ENCODE measurements at regions of chr7 and their contacts with region 1.

Region 1: DNA sequence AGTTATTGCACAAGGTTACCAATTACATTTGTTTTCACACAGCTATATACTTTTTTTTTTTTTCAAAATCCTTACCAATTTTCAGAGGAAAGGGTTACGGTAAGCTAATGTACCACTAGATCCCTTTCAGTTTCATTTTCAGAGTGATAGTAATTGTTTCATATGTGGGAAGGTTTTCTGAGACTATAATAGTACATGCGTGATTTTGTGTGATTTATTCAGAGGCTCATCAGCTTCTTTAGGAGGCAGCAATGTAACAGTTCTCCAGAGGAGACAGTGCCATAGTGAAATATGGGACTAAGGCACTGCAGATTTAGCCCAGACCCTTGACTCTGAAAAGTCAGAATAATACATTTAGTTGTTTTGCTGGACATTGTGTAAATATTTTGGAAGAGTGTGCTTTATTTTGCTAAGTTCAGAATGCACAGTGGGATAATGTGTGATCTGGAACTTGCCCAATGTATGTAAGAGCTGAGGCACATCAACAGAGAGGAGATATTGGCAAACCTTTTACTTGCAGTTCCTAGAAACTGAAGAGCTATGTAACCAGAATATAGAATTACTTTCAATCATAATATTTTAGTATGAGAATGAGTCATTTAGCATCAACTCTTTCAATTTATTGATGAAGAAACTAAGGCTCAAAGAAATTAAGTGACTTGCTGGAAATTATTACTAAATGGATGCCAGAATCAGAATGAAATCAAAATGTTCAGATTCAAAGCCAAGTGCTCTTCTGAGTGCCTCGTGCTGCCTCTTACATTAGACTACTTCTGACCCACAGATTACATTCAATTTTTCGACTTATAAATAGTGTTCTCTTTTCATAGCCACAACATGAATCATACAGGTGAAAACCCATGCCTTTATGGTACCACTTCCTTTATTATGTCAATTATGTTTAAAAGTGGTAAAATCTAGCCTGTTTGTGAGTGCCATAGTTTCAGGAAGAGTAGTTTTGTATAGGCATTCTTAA is 207.7 kb upstream of the TEX47 start:
- DNase-seq: no peak
- ATAC-seq: no peak
- H3K4me3 ChIP-seq: peak overlapping the region in 7 of 10 donors; percentile 7 to 42 (median 35)
- H3K27ac ChIP-seq: no peak overlapping the region
- H3K4me1 ChIP-seq: peaks cover 0 to 8% (median 0%) of the 10 kb centered on the region in 9 donors
- H3K27me3 ChIP-seq: no peaks in the 10 kb centered on the region
- CTCF ChIP-seq: no peak

Region 2: DNA sequence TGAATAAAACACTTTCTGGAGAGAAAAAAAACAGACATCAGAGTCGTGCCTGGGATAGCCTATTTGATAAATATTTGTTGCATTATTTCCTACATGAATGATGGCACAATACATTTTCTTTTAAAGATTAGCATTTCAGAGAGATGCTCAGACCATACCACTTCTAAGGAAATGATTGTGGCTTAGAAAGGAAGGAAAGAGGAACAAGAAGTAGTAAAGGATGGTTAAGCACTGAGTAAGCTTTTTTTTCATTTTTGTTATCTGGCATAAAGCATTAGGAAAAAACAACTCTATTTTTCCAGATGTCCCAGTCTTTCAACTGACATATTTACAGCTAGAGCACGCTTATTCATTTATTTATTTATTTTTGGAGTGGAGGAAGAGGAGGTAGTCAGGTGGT is 51.1 kb after region 1 on chr7:
- intact Hi-C with region 1: loop called in 1 of 10 experiments (anchors 10 kb)
- DNase-seq: no peak
- ATAC-seq: no peak
- H3K4me3 ChIP-seq: no peak overlapping the region
- H3K27ac ChIP-seq: no peak overlapping the region
- H3K4me1 ChIP-seq: no peaks in the 10 kb centered on the region
- H3K27me3 ChIP-seq: no peaks in the 10 kb centered on the region
- CTCF ChIP-seq: no peak